ENCODE measurements at regions of chr11 and their contacts with region 1.

Region 1: DNA sequence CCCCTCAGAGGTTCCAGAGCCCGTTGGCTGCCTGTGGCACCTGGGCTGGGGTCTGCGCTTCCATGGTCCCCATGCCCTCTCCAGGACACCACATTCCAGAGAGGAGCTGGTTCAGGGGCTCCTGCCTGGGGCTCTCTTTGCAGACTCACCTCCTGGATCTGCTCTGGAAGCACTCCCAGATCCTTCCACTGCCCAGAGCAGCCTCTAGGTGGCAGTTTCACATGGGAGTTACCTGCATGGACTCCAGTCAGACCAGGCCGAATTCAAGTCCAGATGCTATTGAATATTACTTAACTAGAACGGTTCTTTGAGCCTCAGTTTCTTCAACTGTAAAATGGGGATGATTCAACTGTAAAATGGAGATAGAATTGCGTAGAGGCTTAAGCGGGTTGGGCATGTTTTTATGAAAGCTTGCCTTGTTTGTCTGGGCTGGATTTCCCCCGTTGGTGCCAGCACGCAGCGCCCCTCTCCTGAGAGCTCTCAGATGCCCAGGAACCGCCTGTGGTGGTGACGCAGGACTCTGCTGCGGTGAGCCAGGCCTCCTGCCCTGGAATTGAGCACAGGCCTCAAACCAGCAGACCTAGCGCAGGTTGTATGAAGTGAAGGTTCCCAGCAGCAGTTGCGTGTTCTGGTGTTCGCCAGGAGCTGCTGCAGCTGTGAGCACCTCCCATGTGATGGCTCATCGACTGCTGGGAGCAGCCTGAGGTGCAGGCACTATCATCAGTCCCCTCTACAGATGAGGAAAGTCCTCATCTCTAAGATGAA is 44.2 kb downstream of the LMO1 start:
- DNase-seq: peak in 1 of 2 experiments; percentile 73
- H3K4me3 ChIP-seq: no peak overlapping the region
- H3K27ac ChIP-seq: no peak overlapping the region
- H3K4me1 ChIP-seq: peaks cover 0 to 2% (median 0%) of the 10 kb centered on the region in 4 experiments; a peak in 1 of 7 replicates
- H3K27me3 ChIP-seq: no peaks in the 10 kb centered on the region; a peak in 1 of 7 replicates
- CTCF ChIP-seq: peak; percentile 70 to 78 (median 73)
- EP300 ChIP-seq: no peak
- POLR2A ChIP-seq: no peak
- RAD21 ChIP-seq: peak; percentile 42 to 64

Region 2: GRCh38 chr11:8209208-8209807 is 10.1 kb before region 1 on chr11:
- CTCF ChIA-PET with region 1: interaction called, 342 read pairs
- POLR2A ChIA-PET with region 1: interaction called, 3 read pairs
- DNase-seq: peak in 1 of 2 experiments; percentile 92
- H3K4me3 ChIP-seq: no peak overlapping the region
- H3K27ac ChIP-seq: no peak overlapping the region
- H3K4me1 ChIP-seq: peaks cover 0 to 7% (median 0%) of the 10 kb centered on the region in 4 experiments; a peak in 1 of 7 replicates
- H3K27me3 ChIP-seq: no peaks in the 10 kb centered on the region
- CTCF ChIP-seq: peak; percentile 67 to 77 (median 75)
- EP300 ChIP-seq: no peak
- POLR2A ChIP-seq: no peak
- RAD21 ChIP-seq: peak; percentile 49 to 62

Region 3: GRCh38 chr11:8233691-8234424 is 14.4 kb after region 1 on chr11:
- CTCF ChIA-PET with region 1: interaction called, 67 read pairs
- POLR2A ChIA-PET with region 1: no interaction called
- DNase-seq: no peak
- H3K4me3 ChIP-seq: no peak overlapping the region
- H3K27ac ChIP-seq: no peak overlapping the region
- H3K4me1 ChIP-seq: no peaks in the 10 kb centered on the region; a peak in 3 of 7 replicates
- H3K27me3 ChIP-seq: no peaks in the 10 kb centered on the region
- CTCF ChIP-seq: no peak
- EP300 ChIP-seq: no peak
- POLR2A ChIP-seq: no peak
- RAD21 ChIP-seq: no peak

Region 4: GRCh38 chr11:8365216-8365941 is 145.9 kb after region 1 on chr11:
- CTCF ChIA-PET with region 1: interaction called, 10 read pairs
- POLR2A ChIA-PET with region 1: no interaction called
- DNase-seq: peak in 1 of 2 experiments; percentile 71
- H3K4me3 ChIP-seq: no peak overlapping the region
- H3K27ac ChIP-seq: no peak overlapping the region
- H3K4me1 ChIP-seq: no peaks in the 10 kb centered on the region
- H3K27me3 ChIP-seq: no peaks in the 10 kb centered on the region
- CTCF ChIP-seq: peak; percentile 12 to 38 (median 30)
- EP300 ChIP-seq: no peak
- POLR2A ChIP-seq: no peak
- RAD21 ChIP-seq: peak; percentile 21 to 38; a peak in 2 of 4 replicates